IMR-90 (cell line): ENCODE measurements at regions of chrX and their contacts with region 1.

Region 1: GRCh38 chrX:74291964-74292807 is 11.8 kb upstream of the ZCCHC13 start:
- DNase-seq: peak; percentile 87
- ATAC-seq: peak; percentile 94
- H3K4me3 ChIP-seq: peak overlapping the region; percentile 89
- H3K27ac ChIP-seq: peak overlapping the region; percentile 98
- H3K4me1 ChIP-seq: no peaks in the 10 kb centered on the region
- H3K27me3 ChIP-seq: no peaks in the 10 kb centered on the region
- CTCF ChIP-seq: 0 out of 2 replicates have a peak, but pooled peaks have one; percentile 28
- POLR2A ChIP-seq: peak; percentile 87
- RAD21 ChIP-seq: peak; percentile 15; the same call in 1 of the 2 replicates

Region 2: GRCh38 chrX:74536152-74536831 is 244.1 kb after region 1 on chrX:
- CTCF ChIA-PET with region 1: no interaction called
- POLR2A ChIA-PET with region 1: no interaction called
- dilution Hi-C with region 1: no loop called
- in situ Hi-C with region 1: no loop called
- intact Hi-C with region 1: loop called (anchors 5 kb)
- DNase-seq: peak; percentile 83
- ATAC-seq: peak; percentile 73
- H3K4me3 ChIP-seq: peak overlapping the region; percentile 38
- H3K27ac ChIP-seq: peak overlapping the region; percentile 83
- H3K4me1 ChIP-seq: peaks cover 6% of the 10 kb centered on the region; the same call in 1 of the 2 replicates
- H3K27me3 ChIP-seq: no peaks in the 10 kb centered on the region
- CTCF ChIP-seq: peak; percentile 37
- POLR2A ChIP-seq: 0 out of 2 replicates have a peak, but pooled peaks have one; percentile 16
- RAD21 ChIP-seq: no peak